ENCODE measurements at regions of chr3 and their contacts with region 1.

Region 1: DNA sequence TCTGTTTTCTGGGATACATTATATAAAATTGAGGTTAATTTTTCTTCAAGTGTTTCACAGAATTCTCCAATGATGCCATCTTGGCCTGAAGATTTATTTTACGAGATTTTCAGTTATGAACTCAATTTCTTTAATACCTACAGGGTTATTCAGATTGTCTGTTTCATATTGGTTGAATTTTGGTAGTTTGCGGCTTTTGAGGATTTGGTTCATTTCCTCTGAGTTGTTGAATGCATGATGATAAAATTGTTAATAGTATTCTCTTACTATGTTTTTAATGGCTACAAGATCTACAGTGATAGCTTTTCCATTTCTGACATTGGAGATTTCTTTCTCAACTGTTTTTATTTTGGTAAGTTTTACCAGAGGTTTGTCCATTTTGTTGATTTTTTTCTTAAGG is 63.9 kb upstream of the PTPRG start:
- DNase-seq: no peak

Region 2: DNA sequence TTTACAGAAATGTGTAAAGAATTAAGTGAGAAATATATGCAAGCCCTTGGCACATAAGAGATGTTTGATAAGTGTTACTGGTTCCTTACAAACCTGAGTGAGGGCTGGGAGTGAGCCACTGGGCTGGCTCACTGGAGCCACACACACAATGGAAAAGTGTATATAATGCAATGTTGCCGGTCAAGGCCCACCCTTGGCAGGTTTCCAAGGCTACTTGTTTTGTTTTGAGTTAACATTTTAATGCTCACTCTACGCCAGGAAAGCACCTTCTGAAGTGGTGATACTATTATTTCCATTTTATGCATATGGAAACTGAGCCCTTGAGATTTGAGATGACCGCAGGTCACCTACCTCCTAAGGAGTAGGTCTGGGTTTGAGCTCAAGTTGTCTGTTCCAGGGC is 174.4 kb before region 1 on chr3:
- intact Hi-C with region 1: loop called in 1 of 2 experiments (anchors 5 kb)
- DNase-seq: no peak

Region 3: GRCh38 chr3:61381745-61382392 is 115.6 kb before region 1 on chr3:
- intact Hi-C with region 1: no loop called
- DNase-seq: no peak